Right cardiac atrium (tissue), 5 donors: ENCODE measurements at regions of chr17 and their contacts with region 1.

Region 1: DNA sequence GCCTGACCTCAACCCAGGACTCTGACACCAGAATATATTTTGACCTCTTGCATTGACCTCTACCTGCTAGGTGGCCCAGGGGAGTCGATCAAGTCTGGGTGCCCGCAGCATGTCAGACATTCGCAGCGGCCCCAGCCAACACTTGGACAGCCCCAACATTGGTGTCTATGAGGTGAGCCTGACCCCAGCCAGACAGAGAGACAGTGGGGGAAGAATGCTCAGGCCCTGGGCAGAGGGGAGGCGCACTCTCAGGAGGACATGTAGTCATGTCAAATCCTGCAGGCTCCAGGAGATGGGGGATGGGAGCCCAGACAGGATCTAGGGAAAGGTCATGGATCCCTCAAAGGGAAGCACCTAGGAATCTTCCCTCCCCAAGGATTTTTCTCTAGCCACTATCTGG is 5.4 kb downstream of the GUCY2D start:
- DNase-seq: no peak
- ATAC-seq: no peak
- H3K4me3 ChIP-seq: no peak overlapping the region
- H3K27ac ChIP-seq: no peak overlapping the region
- H3K4me1 ChIP-seq: no peaks in the 10 kb centered on the region
- H3K27me3 ChIP-seq: no peaks in the 10 kb centered on the region

Region 2: GRCh38 chr17:7969433-7969832 is 38.4 kb before region 1 on chr17:
- intact Hi-C with region 1: loop called in 1 of 4 experiments (anchors 2 kb)
- DNase-seq: no peak
- ATAC-seq: no peak
- H3K4me3 ChIP-seq: no peak overlapping the region
- H3K27ac ChIP-seq: no peak overlapping the region
- H3K4me1 ChIP-seq: no peaks in the 10 kb centered on the region
- H3K27me3 ChIP-seq: no peaks in the 10 kb centered on the region

Region 3: GRCh38 chr17:8447799-8448198 is 439.9 kb after region 1 on chr17:
- intact Hi-C with region 1: no loop called
- DNase-seq: no peak
- ATAC-seq: no peak
- H3K4me3 ChIP-seq: no peak overlapping the region
- H3K27ac ChIP-seq: no peak overlapping the region
- H3K4me1 ChIP-seq: no peaks in the 10 kb centered on the region
- H3K27me3 ChIP-seq: no peaks in the 10 kb centered on the region

Region 4: DNA sequence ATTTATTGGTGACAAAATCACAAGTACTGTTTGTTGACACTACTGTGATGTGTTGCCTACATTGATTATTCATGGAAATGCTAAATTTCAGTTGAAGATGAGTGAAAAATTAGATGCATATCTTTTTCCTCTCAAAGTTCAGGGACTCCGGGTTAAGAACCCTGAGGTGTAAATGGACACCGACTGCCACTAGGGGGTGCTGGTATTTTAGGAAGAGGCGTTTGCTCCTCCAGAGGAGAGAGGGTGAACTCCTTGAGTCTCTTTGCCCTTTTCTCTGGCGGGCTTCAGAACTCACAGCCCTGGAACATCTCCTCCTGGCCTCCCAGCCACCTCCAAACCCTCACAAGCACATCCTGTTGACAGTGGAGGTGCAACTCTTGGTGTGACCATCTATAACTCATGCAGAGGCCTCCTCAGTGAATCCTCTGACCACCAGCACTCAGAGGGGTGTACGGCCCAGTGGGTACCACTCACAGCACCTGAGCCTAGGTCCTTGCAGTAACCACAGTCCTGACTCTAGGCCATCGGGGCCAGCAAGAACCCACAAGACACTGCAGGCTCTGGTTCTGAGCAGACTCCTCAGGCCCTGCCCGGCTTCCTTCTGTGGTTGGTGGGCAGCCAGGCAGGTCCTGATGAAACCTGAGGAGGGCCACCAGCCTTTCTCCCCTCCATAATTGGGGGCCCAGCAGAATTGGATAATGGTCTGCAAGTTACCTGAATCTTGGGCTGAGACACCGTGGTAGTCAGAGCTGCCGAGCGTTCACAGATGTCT is 983.8 kb after region 1 on chr17:
- intact Hi-C with region 1: no loop called
- DNase-seq: peak in 2 of 3 donors; percentile 57 to 78
- ATAC-seq: peak; percentile 58 to 77
- H3K4me3 ChIP-seq: no peak overlapping the region
- H3K27ac ChIP-seq: no peak overlapping the region
- H3K4me1 ChIP-seq: no peaks in the 10 kb centered on the region
- H3K27me3 ChIP-seq: no peaks in the 10 kb centered on the region